Naive thymus-derived CD8-positive, alpha-beta T cell (primary cell): ENCODE measurements at regions of chr2 and their contacts with region 1.

Region 1: DNA sequence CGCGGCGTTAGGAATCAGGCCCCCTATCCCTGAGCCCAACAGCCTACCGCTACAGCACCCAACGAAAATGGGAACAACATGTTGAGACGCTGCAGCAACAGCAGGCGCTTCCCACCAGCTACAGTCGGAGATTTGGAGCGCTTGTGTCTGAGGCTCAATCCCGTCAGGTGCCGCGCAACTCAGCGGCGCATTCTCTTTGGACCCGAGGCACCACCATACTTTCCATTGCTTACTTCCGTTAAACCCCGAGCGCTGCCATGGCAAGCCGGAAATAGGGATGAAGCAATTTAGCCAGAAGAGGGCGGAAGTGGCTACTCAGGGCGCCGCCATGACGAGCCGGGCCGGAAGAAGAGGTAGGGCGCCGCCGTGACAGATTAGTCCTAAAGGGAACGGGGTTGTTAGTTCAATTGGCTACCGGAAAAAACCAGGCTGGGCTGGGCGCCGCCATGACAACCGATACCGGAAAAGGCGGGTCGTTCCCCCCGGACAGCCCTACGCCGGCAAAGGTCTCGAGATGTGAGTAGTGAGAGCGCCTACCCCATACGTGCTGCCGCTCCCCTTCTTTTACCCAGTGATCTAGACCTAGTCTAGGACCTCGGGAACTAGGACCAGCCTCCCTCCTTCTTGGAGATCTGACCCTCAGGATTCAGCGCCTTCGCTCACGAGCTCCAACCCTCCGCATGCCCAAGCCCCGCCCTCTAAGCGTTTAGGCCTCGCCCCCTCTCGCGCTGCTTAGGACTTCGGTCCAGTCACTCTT is at the start of gene CHCHD5:
- DNase-seq: peak; percentile 77 to 97 (median 92)
- ATAC-seq: peak; percentile 89 to 92
- H3K4me3 Mint-ChIP-seq: peak within 1 kb of the TSS; percentile 89 to 99 (median 96)
- H3K27ac Mint-ChIP-seq: peak within 1 kb of the TSS; percentile 94 to 98 (median 98)
- H3K4me1 Mint-ChIP-seq: peaks cover 21 to 52% (median 39%) of the 10 kb centered on the region in 4 donors
- H3K27me3 Mint-ChIP-seq: no peaks in the 10 kb centered on the region
- polyA plus RNA-seq, gene CHCHD5: 43.6 to 61.7 (median 46.2) TPM

Region 2: DNA sequence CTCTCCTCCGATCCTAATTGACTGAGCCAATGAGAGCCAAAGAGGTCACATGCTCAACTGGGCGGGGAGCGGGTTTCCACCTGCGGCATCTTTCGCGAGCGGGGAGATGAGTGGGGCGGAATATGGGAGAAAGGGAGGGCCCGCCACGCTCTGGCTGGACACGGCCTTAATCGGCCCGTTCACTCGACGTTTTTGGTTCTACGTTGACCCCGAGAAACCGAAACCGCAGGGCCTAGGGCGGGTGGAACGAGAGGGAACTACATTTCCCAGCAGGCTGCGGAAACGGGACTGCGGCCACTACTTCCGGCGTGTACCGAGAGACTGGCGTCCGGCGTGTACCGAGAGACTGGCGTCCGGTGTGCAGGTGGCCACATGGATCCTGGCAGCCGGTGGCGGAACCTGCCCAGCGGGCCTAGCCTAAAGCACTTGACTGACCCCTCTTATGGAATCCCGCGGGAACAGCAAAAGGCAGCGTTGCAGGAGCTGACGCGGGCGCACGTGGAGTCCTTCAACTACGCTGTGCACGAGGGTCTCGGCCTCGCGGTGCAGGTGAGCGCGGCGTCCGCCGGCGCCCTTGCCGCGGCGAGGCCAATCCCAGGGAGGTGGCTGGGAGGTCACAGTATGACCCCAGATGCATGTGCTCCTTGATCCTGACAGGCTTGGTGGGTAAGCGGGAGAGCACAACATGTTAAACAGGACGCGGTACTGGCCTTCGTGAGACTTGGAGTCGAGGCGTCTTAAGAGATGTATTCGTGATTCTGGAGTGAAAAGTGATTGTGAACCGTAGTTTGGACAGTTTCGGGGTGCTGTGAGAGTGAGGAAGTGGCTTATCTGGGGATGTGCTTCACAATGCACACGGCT is 42.0 kb before region 1 on chr2 and contains the start of gene POLR1B:
- POLR2A ChIA-PET with region 1: interaction called, 15 read pairs
- DNase-seq: peak in 8 of 10 donors; percentile 53 to 81 (median 66)
- ATAC-seq: peak; percentile 85 to 88
- H3K4me3 Mint-ChIP-seq: no peak within 1 kb of the TSS
- H3K27ac Mint-ChIP-seq: no peak within 1 kb of the TSS
- H3K4me1 Mint-ChIP-seq: peaks cover 6 to 24% (median 12%) of the 10 kb centered on the region in 4 donors
- H3K27me3 Mint-ChIP-seq: no peaks in the 10 kb centered on the region
- polyA plus RNA-seq, gene POLR1B: 14.9 to 23.8 (median 17.5) TPM

Region 3: DNA sequence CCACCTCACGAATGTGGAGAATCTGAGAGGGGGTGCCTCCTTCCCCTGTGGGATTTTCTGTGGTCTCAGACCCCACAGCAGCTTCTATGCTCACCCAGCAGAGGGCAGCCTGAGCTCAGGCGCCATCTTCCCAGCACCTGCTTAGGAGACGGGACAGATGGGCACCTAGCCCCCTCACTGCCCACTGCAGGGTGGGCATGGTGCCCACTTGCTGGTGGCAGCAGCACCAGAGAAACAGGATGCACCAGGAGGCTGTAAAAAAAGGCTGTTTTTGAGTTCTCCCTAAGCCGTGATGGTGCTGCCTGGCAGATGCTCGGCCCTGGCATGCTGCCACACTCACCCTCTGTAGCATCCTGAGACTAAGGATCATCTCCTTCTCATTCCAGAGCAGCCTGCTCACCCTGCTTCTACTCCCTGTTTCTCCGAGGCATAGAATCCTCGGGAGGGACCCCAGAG is 42.3 kb after region 1 on chr2:
- POLR2A ChIA-PET with region 1: interaction called, 14 read pairs
- DNase-seq: peak; percentile 41 to 84 (median 64)
- ATAC-seq: peak; percentile 59 to 66
- H3K4me3 Mint-ChIP-seq: peak overlapping the region; percentile 62 to 83 (median 77)
- H3K27ac Mint-ChIP-seq: peak overlapping the region; percentile 34 to 95 (median 88)
- H3K4me1 Mint-ChIP-seq: peaks cover 19 to 76% (median 56%) of the 10 kb centered on the region in 4 donors
- H3K27me3 Mint-ChIP-seq: peaks cover 0 to 2% (median 0%) of the 10 kb centered on the region in 5 donors

Region 4: DNA sequence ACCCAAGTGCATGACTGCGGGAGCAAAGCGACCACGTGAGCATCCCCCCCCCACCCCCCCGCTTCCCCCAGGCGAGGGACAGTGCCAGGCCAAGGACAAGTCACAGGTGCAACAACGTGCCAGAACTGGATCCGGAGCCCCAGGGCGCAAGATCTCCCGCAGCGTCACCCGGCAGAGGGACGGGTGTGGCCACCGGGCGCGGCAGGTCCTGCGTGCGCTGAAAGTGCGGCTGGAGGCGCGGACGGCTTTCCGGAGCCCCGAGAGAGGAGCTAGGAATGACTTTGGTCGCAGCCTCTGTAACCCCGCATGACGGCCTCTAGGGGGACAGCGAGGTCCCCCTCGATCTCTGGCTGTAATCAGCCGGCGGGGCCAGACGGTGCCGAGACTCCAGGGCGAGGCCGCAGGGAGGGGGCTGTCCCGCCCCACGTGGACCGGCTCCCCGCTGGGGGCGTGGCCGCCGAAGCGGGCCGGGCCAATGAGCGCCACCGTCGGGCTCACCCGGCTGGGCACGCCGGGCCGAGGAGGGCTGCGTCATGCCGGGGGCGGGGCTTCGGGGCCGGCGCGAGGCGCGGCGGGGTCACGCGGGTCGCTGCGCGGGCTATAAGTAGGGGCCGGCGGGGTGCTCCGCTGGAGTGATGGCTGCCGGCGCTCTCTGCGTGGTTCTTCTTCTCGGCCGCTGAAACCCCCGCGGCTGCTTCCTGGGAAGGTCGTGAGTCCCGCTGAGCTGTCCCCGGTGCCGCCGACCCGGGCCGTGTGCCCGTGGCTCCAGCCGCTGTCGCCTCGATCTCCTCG is 61.2 kb after region 1 on chr2 and contains the start of gene SLC20A1:
- POLR2A ChIA-PET with region 1: interaction called, 12 read pairs
- DNase-seq: peak; percentile 96 to 100 (median 99)
- ATAC-seq: peak; percentile 90
- H3K4me3 Mint-ChIP-seq: peak within 1 kb of the TSS; percentile 86 to 95 (median 92)
- H3K27ac Mint-ChIP-seq: peak within 1 kb of the TSS; percentile 59 to 95 (median 92)
- H3K4me1 Mint-ChIP-seq: peaks cover 35 to 64% (median 61%) of the 10 kb centered on the region in 4 donors
- H3K27me3 Mint-ChIP-seq: no peaks in the 10 kb centered on the region
- polyA plus RNA-seq, gene SLC20A1: 17.0 to 33.7 (median 21.2) TPM

Region 5: DNA sequence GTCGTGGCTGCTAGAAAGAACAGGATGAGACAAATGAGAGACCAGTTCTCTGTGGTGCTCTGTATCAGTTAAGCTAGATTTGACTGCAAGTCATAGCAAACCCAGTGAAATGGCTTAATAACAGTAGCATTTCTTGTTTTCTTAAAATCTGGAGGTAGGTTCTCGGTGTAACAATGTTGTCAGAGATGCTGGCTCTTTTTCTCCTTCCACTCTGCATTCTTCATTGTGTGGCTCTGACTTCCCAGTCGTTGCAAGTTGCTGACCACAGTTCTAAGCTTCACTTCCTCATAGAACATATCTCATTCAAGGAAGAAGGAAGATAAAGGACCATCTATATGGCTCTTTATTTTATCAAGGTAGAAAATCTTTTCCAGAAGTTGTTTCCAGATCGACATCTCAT is 188.0 kb after region 1 on chr2:
- POLR2A ChIA-PET with region 1: no interaction called
- DNase-seq: no peak
- ATAC-seq: no peak
- H3K4me3 Mint-ChIP-seq: no peak overlapping the region
- H3K27ac Mint-ChIP-seq: no peak overlapping the region
- H3K4me1 Mint-ChIP-seq: peaks cover 7 to 23% (median 13%) of the 10 kb centered on the region in 4 donors
- H3K27me3 Mint-ChIP-seq: peaks cover 0 to 3% (median 0%) of the 10 kb centered on the region in 5 donors